Activated naive CD4-positive, alpha-beta T cell treated with anti-CD3 and anti-CD28 coated beads for 36 hours (primary cell): ENCODE measurements at regions of chr2 and their contacts with region 1.

Region 1: DNA sequence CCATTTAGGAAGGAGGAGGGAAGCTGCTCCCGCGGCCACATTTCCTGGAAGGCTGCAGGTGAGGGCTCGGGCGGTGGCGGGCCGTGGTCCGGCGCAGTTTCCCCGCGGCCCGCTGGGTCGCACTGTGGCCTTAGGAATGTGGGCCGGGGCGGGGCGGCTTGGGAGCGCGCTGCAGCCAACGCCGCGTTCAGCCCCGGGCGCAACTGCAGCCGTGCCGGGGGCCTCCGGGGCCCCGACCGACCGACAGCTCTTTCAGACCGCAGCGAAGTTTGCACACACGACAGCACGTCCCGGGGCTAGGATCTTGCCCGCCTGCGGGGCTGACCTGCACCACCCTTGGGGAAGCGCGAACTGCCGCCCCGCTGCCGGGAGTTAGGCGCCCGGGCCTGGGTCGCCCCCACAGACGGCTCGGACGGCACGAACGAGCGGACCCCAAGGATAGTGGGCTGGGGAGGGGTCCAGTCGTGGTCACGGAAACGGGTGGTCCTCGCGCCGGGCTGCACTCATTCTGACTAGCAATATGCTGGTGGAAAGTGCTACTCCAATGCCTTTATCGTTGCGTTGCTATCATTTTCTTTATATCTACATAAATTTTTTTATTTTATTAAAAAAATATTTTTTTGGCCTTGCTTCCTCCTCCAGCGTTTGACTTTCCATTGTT is 69.9 kb upstream of the DLX2 start:
- DNase-seq: peak; percentile 72
- H3K4me3 Mint-ChIP-seq: peak overlapping the region; percentile 68
- H3K27ac Mint-ChIP-seq: no peak overlapping the region
- H3K4me1 Mint-ChIP-seq: peaks cover 5% of the 10 kb centered on the region
- H3K27me3 Mint-ChIP-seq: no peaks in the 10 kb centered on the region

Region 2: DNA sequence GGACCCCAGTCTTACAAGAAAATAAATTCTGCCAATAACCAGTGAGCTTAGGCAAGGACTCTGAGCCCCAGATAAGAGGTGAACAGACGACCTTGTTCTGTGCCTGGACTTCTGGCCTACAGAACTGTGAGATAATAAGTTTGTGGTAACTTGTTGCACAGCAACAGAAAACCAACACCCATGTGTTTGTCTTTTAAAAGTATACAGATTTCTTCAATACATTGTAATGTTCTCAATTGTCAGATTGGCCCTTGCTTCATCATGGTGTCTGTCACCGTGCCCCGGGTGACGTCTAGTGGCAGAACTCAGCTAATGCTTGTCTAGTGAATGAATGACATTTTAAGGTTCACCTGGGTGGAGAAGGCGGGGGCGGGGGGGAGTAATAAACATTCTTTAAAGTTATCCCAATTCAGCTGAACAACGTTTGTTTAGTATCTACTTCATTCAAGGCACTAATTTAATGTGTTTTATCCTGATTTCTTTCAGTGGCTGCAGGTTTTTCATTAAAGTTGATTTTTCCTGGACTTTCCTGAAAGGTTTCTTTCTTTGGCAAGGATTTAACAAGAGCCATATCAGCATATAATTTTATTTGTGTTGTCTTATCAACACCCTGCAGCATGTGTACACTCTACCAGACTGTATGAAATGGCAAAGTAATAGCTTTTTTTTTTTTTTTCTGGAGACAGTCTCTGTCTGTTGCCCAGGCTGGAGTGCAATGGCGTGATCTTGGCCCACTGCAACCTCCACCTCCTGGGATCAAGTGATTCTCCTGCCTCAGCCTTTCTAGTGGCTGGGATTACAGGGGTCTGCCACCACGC is 53.8 kb after region 1 on chr2:
- CTCF ChIA-PET with region 1: no interaction called
- intact Hi-C with region 1: loop called (anchors 1 kb)
- DNase-seq: peak; percentile 64
- H3K4me3 Mint-ChIP-seq: no peak overlapping the region
- H3K27ac Mint-ChIP-seq: no peak overlapping the region
- H3K4me1 Mint-ChIP-seq: peaks cover 30% of the 10 kb centered on the region
- H3K27me3 Mint-ChIP-seq: no peaks in the 10 kb centered on the region

Region 3: DNA sequence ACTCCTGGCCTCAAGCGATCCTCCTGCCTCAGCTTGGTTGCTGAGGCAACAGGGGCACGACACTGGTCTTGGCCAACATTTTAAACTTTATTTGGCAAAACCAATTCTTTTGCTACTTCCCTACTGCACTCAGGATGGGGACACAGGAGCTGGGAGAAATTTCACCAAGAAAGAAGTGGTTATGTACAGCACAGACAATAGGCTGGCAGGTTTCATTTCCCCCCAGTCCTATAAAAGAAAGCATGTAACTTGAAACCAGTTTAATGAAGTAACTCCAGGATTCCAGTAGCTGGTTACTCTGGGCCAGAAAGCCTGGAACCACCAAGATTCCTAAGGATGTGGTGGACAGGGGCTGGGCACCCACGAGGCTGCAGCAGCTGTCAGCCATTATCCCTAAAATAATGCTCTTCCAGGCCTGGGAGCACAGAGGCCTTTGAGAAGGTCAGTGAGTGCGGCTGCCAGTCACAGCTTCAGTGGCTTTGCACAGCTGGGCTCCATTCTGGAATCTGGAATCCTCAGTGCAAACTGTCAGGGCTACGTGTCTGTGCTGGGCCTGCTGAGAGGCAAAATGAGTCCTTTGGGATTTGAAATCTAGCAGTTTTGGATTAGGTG is 112.5 kb after region 1 on chr2:
- CTCF ChIA-PET with region 1: interaction called, 4 read pairs
- intact Hi-C with region 1: loop called (anchors 5 kb)
- DNase-seq: no peak
- H3K4me3 Mint-ChIP-seq: no peak overlapping the region
- H3K27ac Mint-ChIP-seq: no peak overlapping the region
- H3K4me1 Mint-ChIP-seq: peaks cover 31% of the 10 kb centered on the region
- H3K27me3 Mint-ChIP-seq: peaks cover 3% of the 10 kb centered on the region

Region 4: GRCh38 chr2:172339371-172340010 is 166.8 kb after region 1 on chr2:
- CTCF ChIA-PET with region 1: interaction called, 6 read pairs
- intact Hi-C with region 1: loop called (anchors 5 kb)
- DNase-seq: peak; percentile 31
- H3K4me3 Mint-ChIP-seq: peak overlapping the region; percentile 60
- H3K27ac Mint-ChIP-seq: no peak overlapping the region
- H3K4me1 Mint-ChIP-seq: peaks cover 21% of the 10 kb centered on the region
- H3K27me3 Mint-ChIP-seq: no peaks in the 10 kb centered on the region

Region 5: DNA sequence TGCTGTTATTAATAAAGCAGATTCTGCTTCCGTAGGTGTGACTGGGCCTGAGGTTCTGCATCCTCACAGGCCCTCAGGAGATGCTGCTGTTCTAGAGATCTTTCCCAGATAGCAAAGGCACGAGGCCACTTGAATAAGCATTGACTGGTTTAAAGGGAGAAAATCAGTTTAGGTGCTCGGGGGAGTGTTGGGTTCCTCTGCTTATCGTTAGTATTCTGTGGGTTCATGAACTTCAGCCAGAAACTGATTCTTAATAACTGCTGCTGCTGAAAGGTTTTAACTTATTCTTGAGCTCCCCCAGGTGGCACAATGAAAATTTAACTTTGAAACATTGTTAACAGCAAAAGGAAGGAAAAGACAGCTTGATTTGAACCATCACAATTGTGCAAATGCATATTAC is 311.6 kb after region 1 on chr2:
- CTCF ChIA-PET with region 1: interaction called, 3 read pairs
- intact Hi-C with region 1: loop called (anchors 1 kb)
- DNase-seq: peak; percentile 37
- H3K4me3 Mint-ChIP-seq: no peak overlapping the region
- H3K27ac Mint-ChIP-seq: no peak overlapping the region
- H3K4me1 Mint-ChIP-seq: peaks cover 52% of the 10 kb centered on the region
- H3K27me3 Mint-ChIP-seq: no peaks in the 10 kb centered on the region

Region 6: GRCh38 chr2:172710584-172711024 is 538.0 kb after region 1 on chr2:
- CTCF ChIA-PET with region 1: no interaction called
- intact Hi-C with region 1: loop called (anchors 1 kb)
- DNase-seq: peak; percentile 69
- H3K4me3 Mint-ChIP-seq: no peak overlapping the region
- H3K27ac Mint-ChIP-seq: no peak overlapping the region
- H3K4me1 Mint-ChIP-seq: no peaks in the 10 kb centered on the region
- H3K27me3 Mint-ChIP-seq: no peaks in the 10 kb centered on the region

Region 7: DNA sequence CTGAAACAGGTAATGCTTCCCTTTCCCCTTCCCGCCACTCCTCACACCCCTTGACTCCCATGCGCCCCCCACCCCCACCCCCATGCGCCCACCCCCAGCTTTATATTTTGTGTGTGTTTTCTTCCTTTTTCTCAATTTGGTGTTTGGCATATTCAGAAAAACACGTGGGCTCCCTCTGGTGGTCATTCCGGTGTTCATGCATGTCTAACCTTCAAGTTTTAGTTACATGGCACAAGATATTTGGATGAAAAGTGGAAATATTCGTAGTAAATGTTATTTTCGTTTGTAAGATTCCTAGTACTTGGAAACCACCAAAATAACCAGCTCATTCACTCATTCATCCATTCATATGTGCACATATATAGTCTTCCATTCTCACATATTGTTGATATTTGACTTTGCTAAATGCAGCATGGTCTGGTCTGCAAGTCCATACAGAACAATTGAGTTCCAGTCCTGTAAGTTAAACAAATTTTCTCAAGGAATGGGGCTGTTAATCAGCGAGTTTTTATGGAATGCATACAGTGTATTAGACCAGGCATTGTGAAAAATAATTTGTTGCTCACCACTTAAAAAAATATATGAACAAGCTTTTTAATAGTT is 759.4 kb after region 1 on chr2:
- CTCF ChIA-PET with region 1: no interaction called
- intact Hi-C with region 1: loop called (anchors 5 kb)
- DNase-seq: peak; percentile 85
- H3K4me3 Mint-ChIP-seq: no peak overlapping the region
- H3K27ac Mint-ChIP-seq: no peak overlapping the region
- H3K4me1 Mint-ChIP-seq: peaks cover 9% of the 10 kb centered on the region
- H3K27me3 Mint-ChIP-seq: no peaks in the 10 kb centered on the region